ENCODE measurements at regions of chr3 and their contacts with region 1.

Region 1: DNA sequence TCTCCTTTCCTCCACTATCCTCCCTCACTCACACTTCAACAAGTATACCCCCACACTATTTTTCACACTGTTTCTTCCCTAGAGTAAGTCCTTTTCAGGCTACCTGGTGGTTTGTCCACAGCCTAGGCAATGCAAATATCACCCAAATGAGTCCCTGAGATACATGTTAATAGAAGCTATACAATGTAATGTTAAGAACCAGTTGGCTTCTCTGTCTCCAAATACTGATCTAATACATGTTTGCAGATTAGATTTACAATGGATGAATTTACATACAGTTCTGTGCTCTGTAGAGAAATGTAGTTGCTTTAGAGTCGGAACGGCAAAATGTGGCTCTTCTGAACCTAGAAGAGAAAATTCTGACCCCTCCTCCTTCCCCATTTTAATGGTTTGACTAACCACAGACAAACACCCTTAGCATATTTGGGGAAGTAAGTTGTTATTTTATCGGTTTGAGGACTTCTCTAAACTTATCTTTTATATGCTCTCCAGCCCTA is 63.6 kb upstream of the MBNL1 start:
- DNase-seq: no peak
- H3K4me3 Mint-ChIP-seq: peak overlapping the region; percentile 86
- H3K27ac Mint-ChIP-seq: peak overlapping the region; percentile 88
- H3K4me1 Mint-ChIP-seq: peaks cover 73% of the 10 kb centered on the region
- H3K27me3 Mint-ChIP-seq: no peaks in the 10 kb centered on the region

Region 2: GRCh38 chr3:151553888-151554287 is 651.3 kb before region 1 on chr3:
- intact Hi-C with region 1: no loop called
- DNase-seq: no peak
- H3K4me3 Mint-ChIP-seq: no peak overlapping the region
- H3K27ac Mint-ChIP-seq: no peak overlapping the region
- H3K4me1 Mint-ChIP-seq: no peaks in the 10 kb centered on the region
- H3K27me3 Mint-ChIP-seq: no peaks in the 10 kb centered on the region

Region 3: GRCh38 chr3:152121292-152121654 is 83.9 kb before region 1 on chr3:
- intact Hi-C with region 1: loop called (anchors 1 kb)
- DNase-seq: no peak
- H3K4me3 Mint-ChIP-seq: no peak overlapping the region
- H3K27ac Mint-ChIP-seq: no peak overlapping the region
- H3K4me1 Mint-ChIP-seq: peaks cover 32% of the 10 kb centered on the region
- H3K27me3 Mint-ChIP-seq: peaks cover 21% of the 10 kb centered on the region

Region 4: GRCh38 chr3:152193673-152194267 is 11.4 kb before region 1 on chr3:
- intact Hi-C with region 1: loop called (anchors 2 kb)
- DNase-seq: peak; percentile 29
- H3K4me3 Mint-ChIP-seq: peak overlapping the region; percentile 69
- H3K27ac Mint-ChIP-seq: peak overlapping the region; percentile 89
- H3K4me1 Mint-ChIP-seq: peaks cover 75% of the 10 kb centered on the region
- H3K27me3 Mint-ChIP-seq: no peaks in the 10 kb centered on the region

Region 5: DNA sequence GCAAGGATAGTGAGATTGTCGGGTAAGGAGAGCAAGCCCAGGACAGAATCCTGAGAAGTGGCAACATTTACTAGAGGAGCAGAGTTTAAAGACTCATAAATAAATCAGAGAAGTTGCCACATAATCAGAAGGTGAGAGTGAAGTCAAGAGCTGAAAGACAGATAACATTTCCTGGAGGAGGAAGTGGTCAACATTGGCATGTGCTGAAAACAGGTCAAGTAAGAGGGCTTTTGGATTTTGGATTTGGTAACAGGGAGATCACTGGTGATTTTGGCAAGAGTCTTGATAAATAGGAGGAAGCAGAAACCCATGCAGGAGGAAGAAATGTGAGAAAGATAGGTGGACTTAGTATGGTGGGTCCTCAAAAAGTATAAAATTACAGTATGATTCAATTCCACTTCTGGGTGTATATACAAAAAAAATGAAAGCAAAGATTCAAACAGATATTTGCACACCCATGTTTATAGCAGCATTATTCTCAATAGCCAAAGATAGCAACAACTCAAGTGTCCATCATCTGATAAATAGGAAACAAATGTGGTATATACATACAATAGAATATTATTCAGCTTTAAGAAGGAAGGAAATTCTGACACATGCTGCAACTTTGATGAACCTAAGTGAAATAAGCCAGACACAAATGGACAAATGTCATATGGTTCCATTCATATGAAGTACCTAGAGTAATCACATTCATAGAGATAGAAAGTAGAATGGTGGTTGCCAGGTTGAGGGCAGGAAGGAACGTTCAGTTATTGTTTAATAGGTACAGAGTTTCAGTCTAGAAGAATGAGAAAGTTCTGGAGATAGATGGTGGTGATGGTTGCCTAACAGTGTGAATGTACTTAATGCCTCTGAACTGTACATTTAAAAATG is 36.2 kb after region 1 on chr3:
- intact Hi-C with region 1: loop called (anchors 1 kb)
- DNase-seq: no peak
- H3K4me3 Mint-ChIP-seq: peak overlapping the region; percentile 66
- H3K27ac Mint-ChIP-seq: peak overlapping the region; percentile 77
- H3K4me1 Mint-ChIP-seq: peaks cover 54% of the 10 kb centered on the region
- H3K27me3 Mint-ChIP-seq: no peaks in the 10 kb centered on the region

Region 6: GRCh38 chr3:152322756-152323155 is 117.6 kb after region 1 on chr3:
- intact Hi-C with region 1: loop called (anchors 5 kb)
- DNase-seq: no peak
- H3K4me3 Mint-ChIP-seq: peak overlapping the region; percentile 11
- H3K27ac Mint-ChIP-seq: peak overlapping the region; percentile 40
- H3K4me1 Mint-ChIP-seq: peaks cover 63% of the 10 kb centered on the region
- H3K27me3 Mint-ChIP-seq: no peaks in the 10 kb centered on the region

Region 7: GRCh38 chr3:153161138-153161713 is 956.1 kb after region 1 on chr3:
- intact Hi-C with region 1: loop called (anchors 5 kb)
- DNase-seq: peak; percentile 93
- H3K4me3 Mint-ChIP-seq: peak overlapping the region; percentile 94
- H3K27ac Mint-ChIP-seq: peak overlapping the region; percentile 97
- H3K4me1 Mint-ChIP-seq: peaks cover 31% of the 10 kb centered on the region
- H3K27me3 Mint-ChIP-seq: no peaks in the 10 kb centered on the region